ENCODE measurements at regions of chr1 and their contacts with region 1.

Region 1: GRCh38 chr1:36285448-36286101 is 20.6 kb upstream of the SH3D21 start:
- DNase-seq: peak; percentile 44 to 73
- ATAC-seq: peak; percentile 86

Region 2: GRCh38 chr1:35835398-35835797 is 450.2 kb before region 1 on chr1:
- intact Hi-C with region 1: no loop called
- DNase-seq: no peak
- ATAC-seq: no peak

Region 3: GRCh38 chr1:36099681-36100341 is 185.8 kb before region 1 on chr1:
- intact Hi-C with region 1: loop called in 1 of 2 experiments (anchors 10 kb)
- DNase-seq: peak; percentile 58 to 89
- ATAC-seq: peak; percentile 91

Region 4: DNA sequence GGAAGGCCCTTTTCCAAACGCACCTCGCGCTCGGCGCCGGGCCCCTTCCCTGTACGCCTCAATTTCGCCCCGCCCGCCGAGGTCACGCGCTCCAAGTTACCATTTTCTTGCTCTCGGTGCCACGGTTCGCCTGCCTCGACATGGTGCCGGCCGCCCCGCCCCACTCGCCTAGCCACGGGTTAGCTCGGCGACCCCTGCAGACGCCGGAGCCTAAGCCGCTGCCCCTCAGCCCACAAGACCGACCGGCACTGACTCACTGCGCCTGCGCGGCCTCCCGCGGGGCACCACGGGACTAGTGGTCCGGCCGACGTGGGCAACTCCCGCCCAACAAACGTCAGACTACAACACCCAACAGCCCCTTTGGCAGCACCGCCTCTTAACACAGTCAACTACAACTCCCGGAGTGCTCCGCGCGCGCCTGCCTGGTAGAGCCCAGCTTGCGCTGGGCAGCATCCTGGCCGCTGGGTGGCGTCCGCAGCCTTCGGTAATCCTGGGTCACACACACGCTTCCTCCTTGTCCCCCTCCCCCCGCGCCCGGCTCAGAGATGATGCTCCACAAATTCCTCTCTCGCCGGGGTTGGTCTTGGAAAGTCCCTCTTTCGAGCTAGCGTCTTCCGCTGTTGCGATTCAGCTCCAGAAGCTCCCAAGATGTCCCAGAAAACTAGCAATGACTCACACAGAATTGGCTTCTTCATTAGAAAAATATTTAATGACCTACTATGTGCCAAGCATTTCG is 136.2 kb before region 1 on chr1 and contains the start of gene TRAPPC3:
- intact Hi-C with region 1: loop called in 1 of 2 experiments (anchors 5 kb)
- DNase-seq: peak; percentile 100
- ATAC-seq: peak; percentile 89
- total RNA-seq, gene TRAPPC3: 62.4 to 63.0 TPM

Region 5: DNA sequence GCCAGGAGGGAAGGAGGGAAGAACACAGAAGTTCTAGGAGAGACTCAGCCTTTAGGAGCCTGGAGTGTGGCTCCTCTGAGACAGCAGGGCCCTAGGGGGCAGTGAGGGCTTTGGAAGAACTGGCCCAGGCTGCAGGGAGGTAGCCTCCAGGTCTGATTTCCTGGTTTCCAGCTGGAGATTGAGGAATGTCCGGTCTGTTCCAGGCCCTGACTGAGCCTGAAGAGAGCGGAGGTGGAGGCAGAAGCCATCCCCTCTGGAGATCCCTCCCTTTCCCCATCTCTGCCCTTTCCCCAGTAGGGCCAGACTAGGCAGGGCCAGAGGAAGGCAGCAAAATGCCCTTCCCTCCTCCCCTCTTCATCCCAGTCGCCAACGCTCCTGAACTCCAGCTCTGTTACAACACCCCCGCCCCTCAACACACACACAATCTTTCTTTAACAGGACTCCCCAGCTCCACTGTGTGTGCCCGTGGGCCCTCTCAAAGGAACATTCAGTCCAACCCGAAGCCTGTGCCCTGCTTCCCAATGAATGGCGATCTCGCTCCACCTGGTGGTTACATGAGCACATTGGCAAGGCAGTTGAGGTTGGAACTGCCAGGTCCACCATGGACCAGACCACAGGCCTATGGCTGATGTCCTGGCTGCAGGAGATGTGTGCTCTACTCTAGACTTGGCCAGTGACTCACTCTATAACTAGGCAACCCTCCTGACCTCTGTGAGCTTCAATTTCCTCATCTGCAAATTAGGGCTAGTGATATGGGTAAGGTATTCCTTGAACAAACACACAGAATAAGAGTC is 97.6 kb before region 1 on chr1:
- intact Hi-C with region 1: loop called in 1 of 2 experiments (anchors 10 kb)
- DNase-seq: peak; percentile 85 to 86
- ATAC-seq: peak; percentile 99

Region 6: DNA sequence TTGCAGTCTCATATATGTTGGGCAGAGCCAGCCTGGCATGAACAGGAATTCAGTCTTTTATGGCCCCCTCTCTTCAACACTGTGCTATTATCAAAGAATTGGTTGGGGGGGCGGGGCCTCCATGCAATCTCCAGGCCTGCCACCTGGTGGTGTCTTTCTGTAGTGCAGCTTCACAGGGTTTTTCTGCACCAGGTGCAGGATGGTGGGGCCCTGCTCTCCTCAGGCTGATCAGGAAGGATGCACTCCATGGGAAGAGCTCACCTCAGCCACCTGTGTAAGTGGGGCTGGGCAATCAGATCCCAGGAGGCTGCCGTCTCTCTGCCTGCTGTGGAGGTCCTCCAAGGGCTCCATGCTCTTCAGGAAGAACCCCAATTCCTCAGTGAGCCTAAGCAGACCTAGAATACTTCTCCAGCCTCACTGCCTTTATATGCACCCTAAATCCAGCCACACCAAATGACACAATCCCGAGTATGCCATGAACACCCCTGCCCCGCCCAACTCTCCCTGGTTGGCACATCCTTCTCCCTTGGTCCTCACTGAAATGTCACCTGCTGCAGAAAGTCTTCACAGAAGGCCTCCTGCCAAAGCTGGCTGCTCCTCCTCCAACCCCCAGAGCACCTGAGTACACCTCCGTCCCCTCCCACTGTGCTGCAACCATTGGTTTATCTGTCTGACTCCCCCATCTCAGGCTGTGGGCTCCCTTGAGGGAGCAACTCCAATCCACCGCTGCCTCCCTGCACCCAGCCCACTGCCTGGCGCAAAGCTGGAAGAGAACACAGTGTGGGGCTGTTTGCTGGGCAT is 83.7 kb after region 1 on chr1:
- intact Hi-C with region 1: no loop called
- DNase-seq: peak; percentile 73 to 93
- ATAC-seq: peak; percentile 56

Region 7: DNA sequence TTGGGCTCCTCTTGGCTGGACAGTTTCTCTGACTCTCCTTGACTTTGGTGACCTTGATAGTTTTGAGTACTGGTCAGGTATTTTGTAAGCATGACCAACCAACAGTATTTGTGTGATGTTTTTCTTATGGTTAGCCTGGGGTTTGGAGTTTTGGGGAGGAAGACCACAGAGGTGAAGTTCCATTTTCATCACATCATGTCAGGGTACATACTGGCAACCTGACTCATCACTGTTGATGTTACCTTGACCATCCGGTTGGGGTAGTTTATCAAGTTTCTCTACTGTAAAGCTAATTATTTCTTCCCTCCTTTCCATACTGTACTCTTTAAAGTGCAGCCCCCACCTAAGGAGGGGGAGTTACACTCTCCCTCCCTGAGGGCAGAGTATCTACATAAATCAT is 151.2 kb after region 1 on chr1:
- intact Hi-C with region 1: no loop called
- DNase-seq: no peak
- ATAC-seq: no peak